ENCODE measurements at regions of chr9 and their contacts with region 1.

Region 1: GRCh38 chr9:1890816-1891215 is 124.3 kb upstream of the SMARCA2 start:
- DNase-seq: peak in 1 of 10 donors; percentile 29
- H3K4me3 ChIP-seq: no peak overlapping the region
- H3K27ac ChIP-seq: no peak overlapping the region
- H3K27me3 ChIP-seq: peaks cover 0 to 8% (median 0%) of the 10 kb centered on the region in 45 donors
- CTCF ChIP-seq: no peak

Region 2: GRCh38 chr9:1653282-1653681 is 237.5 kb before region 1 on chr9:
- intact Hi-C with region 1: loop called in 1 of 2 experiments (anchors 5 kb)
- DNase-seq: no peak
- H3K4me3 ChIP-seq: no peak overlapping the region
- H3K27ac ChIP-seq: no peak overlapping the region
- H3K27me3 ChIP-seq: peaks cover 0 to 18% (median 0%) of the 10 kb centered on the region in 45 donors
- CTCF ChIP-seq: no peak

Region 3: GRCh38 chr9:1722404-1722803 is 168.4 kb before region 1 on chr9:
- intact Hi-C with region 1: no loop called
- DNase-seq: no peak
- H3K4me3 ChIP-seq: no peak overlapping the region
- H3K27ac ChIP-seq: no peak overlapping the region
- H3K27me3 ChIP-seq: peaks cover 0 to 11% (median 0%) of the 10 kb centered on the region in 45 donors
- CTCF ChIP-seq: no peak

Region 4: GRCh38 chr9:1979741-1980367 is 89.0 kb after region 1 on chr9:
- intact Hi-C with region 1: no loop called
- DNase-seq: peak in 1 of 10 donors; percentile 4
- H3K4me3 ChIP-seq: peak overlapping the region in 25 of 59 donors; percentile 1 to 44 (median 20)
- H3K27ac ChIP-seq: peak overlapping the region in 1 of 59 donors; percentile 9
- H3K27me3 ChIP-seq: no peaks in the 10 kb centered on the region
- CTCF ChIP-seq: no peak

Region 5: DNA sequence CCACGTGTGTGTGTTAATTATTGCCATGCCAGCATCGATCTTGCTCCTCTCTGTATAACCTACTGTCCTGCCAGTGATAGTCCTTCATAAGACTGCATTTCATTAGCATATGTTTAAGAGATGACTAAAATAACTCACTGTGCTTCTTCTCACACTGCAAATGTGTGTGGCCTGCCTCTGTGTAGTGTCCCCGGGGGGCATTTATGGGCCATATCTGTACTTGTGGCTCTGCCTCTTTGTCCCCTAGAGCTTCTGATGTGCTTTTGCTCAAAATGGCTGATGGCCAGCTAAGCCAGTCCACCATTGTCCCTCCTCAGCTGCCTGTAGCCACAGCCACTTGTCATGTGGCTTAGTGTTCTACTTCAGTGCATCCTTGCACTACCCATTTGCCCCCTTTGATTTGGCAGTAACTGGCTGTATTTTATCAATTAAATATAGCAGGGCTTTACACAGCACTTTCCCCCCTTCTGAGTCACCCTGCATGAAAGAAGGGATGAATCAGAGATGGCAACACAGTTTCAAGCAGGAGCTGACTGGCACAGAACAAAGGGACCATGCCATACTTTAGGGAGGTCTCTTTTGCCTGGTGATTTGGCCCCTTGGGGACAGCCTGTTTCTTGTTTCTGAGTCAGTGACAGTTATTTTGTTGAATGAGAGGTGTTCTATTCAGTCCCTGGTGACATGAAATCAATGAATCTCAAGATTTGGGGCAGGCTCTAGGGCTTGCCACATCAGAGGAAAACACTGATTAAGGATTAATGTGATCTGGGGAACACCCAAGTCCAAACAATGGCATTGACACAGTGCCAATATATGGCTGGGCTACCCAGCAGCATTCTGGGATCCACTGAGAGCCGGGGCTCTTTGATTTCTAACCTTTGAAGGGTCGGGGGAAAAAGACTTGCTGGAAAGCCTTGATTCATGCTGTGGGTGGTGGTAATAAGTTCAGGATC is 369.8 kb after region 1 on chr9:
- intact Hi-C with region 1: no loop called
- DNase-seq: no peak
- H3K4me3 ChIP-seq: no peak overlapping the region
- H3K27ac ChIP-seq: peak overlapping the region in 4 of 59 donors; percentile 6 to 31 (median 11)
- H3K27me3 ChIP-seq: no peaks in the 10 kb centered on the region
- CTCF ChIP-seq: no peak